Posterior cingulate gyrus (tissue), 11 donors: ENCODE measurements at regions of chr9 and their contacts with region 1.

Region 1: DNA sequence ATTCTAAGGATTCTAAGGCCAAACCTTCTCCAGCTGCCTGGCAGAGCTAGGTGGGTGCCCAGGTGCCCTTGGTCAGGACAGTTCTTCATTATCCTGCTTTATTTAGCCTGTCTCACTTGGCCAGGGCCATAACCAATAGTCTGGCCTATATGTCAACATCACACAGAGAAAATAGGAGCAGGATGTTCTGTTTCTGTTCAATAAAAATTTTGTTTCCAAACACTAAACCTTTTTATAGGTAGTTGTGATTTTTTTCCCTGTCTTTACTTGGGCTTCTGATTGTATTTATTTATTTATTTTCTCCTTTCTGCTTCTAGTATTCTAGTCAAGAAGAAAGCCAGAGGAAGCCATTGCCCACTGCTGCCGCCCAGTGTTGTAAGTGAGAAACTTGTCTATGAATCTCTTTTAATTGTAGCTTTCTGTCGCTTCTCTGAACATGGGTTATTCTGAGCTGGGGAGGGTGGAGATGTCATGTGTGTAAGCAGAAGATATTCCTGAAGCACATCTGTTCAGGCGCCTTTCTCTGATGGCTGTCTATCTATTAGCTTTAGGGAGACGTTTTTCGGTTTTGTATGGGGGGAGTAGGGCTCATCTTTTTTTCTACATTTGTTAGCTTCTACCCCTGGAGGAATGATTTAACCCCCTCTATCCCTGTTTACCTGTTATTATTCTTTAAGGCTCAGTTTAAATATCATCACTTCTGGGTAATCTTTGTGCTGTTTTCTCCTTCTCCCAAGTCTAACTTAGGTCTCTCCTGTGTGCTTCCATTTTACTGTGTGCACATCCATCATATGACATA is 97.1 kb downstream of the UNC13B start:
- DNase-seq: peak; percentile 38 to 95 (median 76)

Region 2: DNA sequence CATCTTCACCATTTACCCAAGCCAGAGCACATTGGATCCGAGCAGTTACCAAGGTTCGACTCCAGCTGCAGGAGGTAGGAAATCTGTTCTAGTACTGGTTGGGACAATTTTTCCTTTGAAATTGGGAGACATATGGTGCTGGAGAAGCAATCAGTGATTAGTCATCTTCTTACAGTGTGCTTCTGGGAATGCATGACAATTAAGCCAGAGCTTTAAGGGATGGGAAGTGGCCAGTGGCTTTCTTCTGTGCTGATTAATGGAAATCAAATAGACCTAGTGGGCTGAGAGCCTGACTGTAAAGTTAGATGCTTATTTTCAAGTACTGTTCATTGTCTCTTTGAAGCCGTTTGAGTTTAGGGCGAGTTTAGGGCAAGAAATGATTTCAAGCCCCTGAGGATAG is 55.0 kb after region 1 on chr9:
- intact Hi-C with region 1: loop called (anchors 10 kb)
- DNase-seq: no peak